ENCODE measurements at regions of chr1 and their contacts with region 1.

Region 1: DNA sequence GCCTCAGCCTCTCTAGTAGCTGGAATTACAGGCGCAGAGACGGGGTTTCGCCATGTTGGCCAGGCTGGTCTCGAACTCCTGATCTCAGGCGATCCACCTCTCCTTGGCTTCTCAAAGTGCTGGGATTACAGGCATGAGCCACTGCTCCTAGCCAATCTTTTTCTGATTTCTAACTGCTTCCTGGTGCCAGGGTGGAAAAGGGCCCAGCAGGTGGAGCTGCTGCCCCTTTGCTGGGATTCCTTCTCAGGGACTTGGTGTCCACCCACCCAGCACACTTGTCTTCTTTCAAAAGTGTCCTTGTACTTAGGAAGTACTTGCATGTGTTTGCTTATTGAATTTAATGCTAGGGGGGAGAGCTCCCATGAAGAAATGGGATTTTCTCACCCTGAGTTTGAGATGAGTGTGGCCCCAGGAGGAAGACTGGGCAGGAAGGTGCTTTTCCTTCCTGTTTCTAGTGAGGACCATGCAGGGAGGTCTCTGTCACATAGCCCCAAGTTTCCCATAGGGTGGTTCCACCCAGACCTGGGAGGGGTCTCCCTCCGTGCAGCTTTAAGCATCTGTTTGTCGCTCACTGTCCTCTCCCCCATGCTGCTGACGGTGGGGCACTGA is 14.2 kb downstream of the UTP11 start:
- DNase-seq: peak; percentile 50 to 56
- ATAC-seq: peak; percentile 57 to 80; a peak in 4 of 6 replicates
- H3K4me3 ChIP-seq: no peak overlapping the region
- H3K27ac ChIP-seq: no peak overlapping the region
- H3K4me1 ChIP-seq: 0 out of 3 replicates have a peak, but pooled peaks cover 3% of the 10 kb centered on the region
- CTCF ChIP-seq: peak; percentile 60
- EP300 ChIP-seq: no peak
- POLR2A ChIP-seq: no peak
- RAD21 ChIP-seq: peak; percentile 67 to 76

Region 2: GRCh38 chr1:37764414-37764825 is 262.3 kb before region 1 on chr1:
- CTCF ChIA-PET with region 1: no interaction called
- POLR2A ChIA-PET with region 1: no interaction called
- DNase-seq: no peak
- ATAC-seq: peak; percentile 68 to 76; a peak in 5 of 6 replicates
- H3K4me3 ChIP-seq: no peak overlapping the region
- H3K27ac ChIP-seq: no peak overlapping the region
- H3K4me1 ChIP-seq: no peaks in the 10 kb centered on the region
- CTCF ChIP-seq: no peak
- EP300 ChIP-seq: no peak
- POLR2A ChIP-seq: no peak
- RAD21 ChIP-seq: no peak

Region 3: DNA sequence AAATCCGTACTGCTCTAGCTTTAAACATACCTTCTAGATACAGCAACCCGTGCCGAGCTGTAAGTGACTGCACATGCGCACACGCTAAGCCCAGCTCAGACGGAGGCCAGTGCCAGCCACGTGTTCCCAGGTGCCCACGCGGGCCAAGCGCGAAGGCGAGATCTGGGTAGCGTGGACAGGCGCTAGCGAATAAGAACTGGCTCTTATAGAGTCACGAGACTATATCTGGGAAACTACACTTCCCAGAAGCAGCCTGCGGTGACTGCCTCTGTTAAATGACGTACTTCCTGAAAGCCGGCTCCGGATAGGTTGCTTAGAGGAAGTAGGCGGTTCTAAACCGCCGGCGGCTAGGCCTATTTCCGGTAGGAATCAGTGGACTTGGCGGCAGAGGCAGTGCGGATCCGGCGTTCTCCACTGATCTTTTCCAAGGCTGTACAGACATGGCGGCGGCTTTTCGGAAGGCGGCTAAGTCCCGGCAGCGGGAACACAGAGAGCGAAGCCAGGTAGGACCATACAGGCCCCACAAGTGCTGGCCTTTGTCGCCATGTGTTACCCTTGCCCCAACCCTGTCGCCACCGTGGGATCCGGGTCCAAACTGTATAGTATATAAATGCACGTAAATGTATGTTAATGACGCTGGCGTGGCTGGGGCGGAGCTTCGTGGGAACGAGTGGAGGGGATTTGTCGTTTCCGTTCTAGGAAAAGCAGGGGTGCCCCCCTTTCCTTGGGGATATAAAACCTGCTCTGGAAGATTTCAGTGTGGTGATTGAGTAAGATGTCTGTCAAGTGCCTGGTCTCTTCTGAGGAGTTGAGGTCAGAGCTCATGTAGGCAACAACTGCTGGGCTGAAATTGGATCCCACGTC is 14.1 kb before region 1 on chr1 and contains the start of gene UTP11:
- CTCF ChIA-PET with region 1: interaction called, 31 read pairs
- POLR2A ChIA-PET with region 1: no interaction called
- DNase-seq: peak; percentile 96 to 99
- ATAC-seq: peak; percentile 98 to 99
- H3K4me3 ChIP-seq: peak within 1 kb of the TSS; percentile 68
- H3K27ac ChIP-seq: peak within 1 kb of the TSS; percentile 94 to 95
- H3K4me1 ChIP-seq: peaks cover 30% of the 10 kb centered on the region
- CTCF ChIP-seq: no peak
- EP300 ChIP-seq: no peak
- POLR2A ChIP-seq: peak; percentile 71
- RAD21 ChIP-seq: no peak
- polyA plus RNA-seq, gene UTP11: 27.0 and 37.6 TPM in 2 replicates

Region 4: GRCh38 chr1:38052750-38053410 is 26.2 kb after region 1 on chr1:
- CTCF ChIA-PET with region 1: no interaction called
- POLR2A ChIA-PET with region 1: no interaction called
- DNase-seq: no peak
- ATAC-seq: no peak
- H3K4me3 ChIP-seq: no peak overlapping the region
- H3K27ac ChIP-seq: no peak overlapping the region
- H3K4me1 ChIP-seq: no peaks in the 10 kb centered on the region
- CTCF ChIP-seq: no peak
- EP300 ChIP-seq: no peak
- POLR2A ChIP-seq: no peak
- RAD21 ChIP-seq: no peak

Region 5: DNA sequence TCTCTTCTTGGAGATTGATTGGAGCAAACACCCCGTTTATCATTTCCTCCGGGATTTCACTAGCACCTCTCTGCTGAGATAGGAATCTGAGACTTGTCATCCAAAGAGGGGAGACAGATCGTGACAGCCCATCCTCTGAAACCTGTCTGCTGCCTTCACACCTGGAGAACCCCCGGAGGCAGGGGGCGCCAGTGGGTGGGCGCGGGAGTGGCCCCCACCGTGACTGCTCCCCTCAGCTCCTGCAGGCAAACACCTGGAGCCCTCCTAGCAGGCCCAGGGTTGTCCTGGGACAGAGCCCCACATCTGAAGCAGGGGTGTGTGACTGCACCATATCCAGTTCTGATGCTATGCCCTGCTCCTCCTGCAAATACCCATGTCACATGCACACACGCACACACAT is 229.4 kb after region 1 on chr1:
- CTCF ChIA-PET with region 1: no interaction called
- POLR2A ChIA-PET with region 1: no interaction called
- DNase-seq: no peak
- ATAC-seq: no peak
- H3K4me3 ChIP-seq: no peak overlapping the region
- H3K27ac ChIP-seq: no peak overlapping the region
- H3K4me1 ChIP-seq: no peaks in the 10 kb centered on the region
- CTCF ChIP-seq: no peak
- EP300 ChIP-seq: no peak
- POLR2A ChIP-seq: no peak
- RAD21 ChIP-seq: no peak

Region 6: DNA sequence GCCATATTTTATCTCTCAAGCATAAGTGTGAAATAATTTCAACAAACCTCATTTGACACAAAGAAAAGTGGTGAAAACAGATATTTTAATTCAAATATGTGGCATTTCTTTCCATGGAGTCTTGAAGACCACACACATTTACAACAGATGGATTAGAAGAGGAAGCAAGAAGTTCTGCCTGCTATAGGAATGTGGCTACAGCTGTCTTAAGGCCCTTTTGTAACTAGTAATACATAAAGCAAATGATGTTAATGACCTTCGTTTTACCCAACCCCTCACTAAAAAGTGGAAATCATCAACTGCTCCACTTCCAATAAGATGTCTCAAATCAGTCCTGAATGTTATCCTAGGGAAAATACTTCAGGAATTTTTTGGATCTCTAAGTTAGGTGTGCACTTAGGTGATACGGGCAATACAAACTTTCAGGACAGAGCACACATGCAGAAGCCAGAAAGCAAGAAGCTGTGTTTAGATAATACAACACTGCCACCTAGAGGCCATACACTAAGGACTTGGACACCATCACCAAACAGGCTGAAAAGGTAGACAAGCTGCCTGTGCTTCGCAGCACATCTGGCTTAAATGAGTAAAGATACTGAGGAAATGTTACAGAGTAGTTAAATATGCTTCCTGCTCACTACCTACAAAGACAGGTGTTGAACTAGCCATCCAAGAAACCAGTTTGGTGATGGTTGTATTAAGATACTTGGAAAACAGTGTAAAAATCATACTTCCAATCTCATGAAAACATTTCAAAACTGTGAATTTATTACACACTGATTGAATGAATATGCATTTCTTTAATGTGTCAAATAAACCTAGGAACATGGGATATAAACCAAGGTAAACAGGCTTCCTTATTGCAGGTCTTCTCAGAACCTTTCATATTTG is 808.5 kb after region 1 on chr1:
- CTCF ChIA-PET with region 1: interaction called, 21 read pairs
- POLR2A ChIA-PET with region 1: no interaction called
- DNase-seq: peak; percentile 43 to 82
- ATAC-seq: peak; percentile 95 to 96
- H3K4me3 ChIP-seq: no peak overlapping the region
- H3K27ac ChIP-seq: no peak overlapping the region
- H3K4me1 ChIP-seq: no peaks in the 10 kb centered on the region
- CTCF ChIP-seq: peak; percentile 66
- EP300 ChIP-seq: no peak
- POLR2A ChIP-seq: no peak
- RAD21 ChIP-seq: peak; percentile 75 to 79